Left cardiac atrium (tissue), 4 donors: ENCODE measurements at regions of chr6 and their contacts with region 1.

Region 1: DNA sequence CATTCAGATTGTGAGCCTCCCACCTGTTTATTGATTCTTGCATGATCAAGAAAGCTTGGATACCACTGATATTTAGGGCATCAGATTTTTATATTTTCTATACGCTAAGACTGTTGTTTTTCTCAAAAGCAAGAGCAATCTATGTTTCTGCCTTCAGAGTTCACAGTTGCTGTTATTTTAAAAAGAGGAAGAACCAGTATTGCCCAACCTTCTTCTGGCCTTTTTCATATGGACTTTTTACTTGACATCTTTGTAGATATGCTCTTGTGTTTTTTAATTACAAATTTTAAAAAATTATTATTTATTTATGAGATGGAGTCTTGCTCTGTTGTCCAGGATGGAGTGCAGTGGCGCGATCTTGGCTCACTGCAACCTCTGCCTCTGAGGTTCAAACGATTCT is 28.9 kb downstream of the SLC17A5 start:
- DNase-seq: no peak
- ATAC-seq: no peak

Region 2: DNA sequence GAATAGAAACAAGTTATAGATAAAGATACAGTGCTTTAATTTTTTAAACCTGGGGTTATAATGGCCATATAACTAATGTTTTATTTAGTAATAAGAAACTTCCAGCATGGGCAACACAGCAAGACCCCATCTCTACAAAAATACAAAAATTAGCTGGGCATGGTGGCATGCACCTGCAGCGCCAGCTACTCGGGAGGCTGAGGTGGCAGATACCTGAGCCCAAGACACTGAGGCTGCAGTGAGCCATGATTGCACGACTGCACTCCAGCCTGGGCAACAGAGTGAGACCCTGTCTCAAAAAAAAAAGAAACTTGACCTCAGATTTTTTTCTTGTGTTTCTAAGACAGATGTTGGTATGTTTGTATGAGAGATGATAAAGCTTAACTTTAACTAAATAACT is 127.0 kb before region 1 on chr6:
- intact Hi-C with region 1: loop called in 1 of 2 experiments (anchors 5 kb)
- DNase-seq: no peak
- ATAC-seq: no peak

Region 3: GRCh38 chr6:73691512-73691911 is 66.6 kb after region 1 on chr6:
- intact Hi-C with region 1: no loop called
- DNase-seq: no peak
- ATAC-seq: no peak

Region 4: DNA sequence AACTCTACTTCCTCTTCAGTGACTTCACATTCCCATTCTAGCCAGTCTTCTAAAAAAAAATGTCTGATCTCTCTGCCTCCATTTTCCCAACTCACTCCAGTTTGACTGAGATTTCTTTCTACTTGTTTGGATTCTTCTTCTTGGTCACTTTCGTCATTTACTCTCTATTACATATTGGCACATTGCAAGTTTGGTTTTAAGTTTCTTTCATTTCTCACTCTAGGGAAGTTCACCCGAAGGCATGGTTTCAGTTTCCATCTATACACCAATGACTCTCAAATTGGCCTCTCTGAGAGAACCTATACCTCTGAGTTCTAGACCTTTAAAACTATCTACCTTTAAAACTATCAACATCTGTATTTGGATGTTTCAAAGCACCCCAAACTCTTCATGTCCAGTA is 122.4 kb after region 1 on chr6:
- intact Hi-C with region 1: no loop called
- DNase-seq: no peak
- ATAC-seq: peak in 1 of 2 donors; percentile 24